ENCODE measurements at regions of chr2 and their contacts with region 1.

Region 1: DNA sequence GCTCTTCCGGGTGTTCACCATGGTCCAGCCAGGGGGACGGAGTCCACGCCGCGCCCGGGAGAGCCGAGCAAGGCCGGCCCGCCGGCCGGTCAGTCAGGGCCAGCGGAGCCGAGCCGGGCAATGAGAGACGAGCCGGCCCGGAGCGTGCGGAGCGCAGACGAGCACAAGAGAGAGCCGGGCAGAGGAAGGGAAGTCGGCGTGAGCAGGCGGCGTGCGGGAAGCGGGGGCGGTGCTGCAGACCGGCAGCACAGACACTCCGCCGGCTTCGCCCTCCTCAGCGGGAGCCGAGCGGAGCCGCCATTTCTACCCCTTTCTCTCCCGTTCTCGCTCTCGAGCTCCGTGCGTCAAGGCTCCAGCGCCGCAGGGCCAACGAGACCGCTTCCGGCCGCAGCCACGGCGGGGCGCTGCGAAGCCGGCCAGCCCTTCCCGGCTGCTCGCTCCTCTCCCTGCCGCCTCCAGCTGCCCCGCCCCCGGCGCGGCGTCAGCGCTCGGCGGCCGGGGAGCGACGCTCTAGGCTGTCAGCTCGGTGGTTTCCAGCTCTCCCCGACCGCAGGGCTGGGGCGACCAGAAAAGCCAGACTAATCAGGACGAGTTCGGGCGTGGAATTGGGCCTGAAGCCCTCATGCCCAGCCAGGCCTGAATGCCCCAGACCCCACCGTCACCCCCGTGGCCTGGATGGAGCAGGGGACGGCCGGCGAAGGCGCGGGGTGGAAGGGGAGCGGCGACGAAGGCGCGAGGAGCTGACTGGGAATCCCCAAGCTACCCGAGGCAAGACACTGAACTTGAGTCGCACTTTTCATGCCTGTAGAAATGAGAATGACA is at the start of gene ATAD2B:
- DNase-seq: peak; percentile 86 to 96
- H3K4me3 ChIP-seq: peak within 1 kb of the TSS; percentile 99
- H3K27ac ChIP-seq: peak within 1 kb of the TSS; percentile 76
- H3K4me1 ChIP-seq: peaks cover 30% of the 10 kb centered on the region
- H3K27me3 ChIP-seq: no peaks in the 10 kb centered on the region
- CTCF ChIP-seq: peak; percentile 79
- total RNA-seq, gene ATAD2B: 12.6 and 12.8 TPM in 2 replicates

Region 2: DNA sequence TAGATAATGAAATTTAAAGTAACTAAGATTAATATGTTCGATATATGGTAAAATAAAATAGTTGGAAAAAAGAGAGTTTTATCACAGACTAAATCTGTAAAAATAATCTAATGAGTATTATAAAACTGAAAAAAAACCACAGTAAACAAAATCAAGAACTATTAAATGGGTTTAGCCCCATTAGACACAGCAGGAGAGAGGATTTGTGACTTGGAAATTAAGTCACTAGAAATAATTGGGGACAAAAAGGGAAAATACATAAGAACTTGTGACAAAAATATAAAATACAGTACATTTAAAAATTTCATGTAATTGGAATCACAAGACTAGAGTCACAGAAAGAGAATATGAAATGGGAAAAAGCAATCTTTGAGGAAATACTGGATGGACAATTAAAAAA is 1656.6 kb before region 1 on chr2:
- CTCF ChIA-PET with region 1: no interaction called
- POLR2A ChIA-PET with region 1: no interaction called
- intact Hi-C with region 1: no loop called
- DNase-seq: no peak
- H3K4me3 ChIP-seq: no peak overlapping the region
- H3K27ac ChIP-seq: no peak overlapping the region
- H3K4me1 ChIP-seq: no peaks in the 10 kb centered on the region
- H3K27me3 ChIP-seq: 0 out of 2 replicates have a peak, but pooled peaks cover 3% of the 10 kb centered on the region
- CTCF ChIP-seq: no peak

Region 3: DNA sequence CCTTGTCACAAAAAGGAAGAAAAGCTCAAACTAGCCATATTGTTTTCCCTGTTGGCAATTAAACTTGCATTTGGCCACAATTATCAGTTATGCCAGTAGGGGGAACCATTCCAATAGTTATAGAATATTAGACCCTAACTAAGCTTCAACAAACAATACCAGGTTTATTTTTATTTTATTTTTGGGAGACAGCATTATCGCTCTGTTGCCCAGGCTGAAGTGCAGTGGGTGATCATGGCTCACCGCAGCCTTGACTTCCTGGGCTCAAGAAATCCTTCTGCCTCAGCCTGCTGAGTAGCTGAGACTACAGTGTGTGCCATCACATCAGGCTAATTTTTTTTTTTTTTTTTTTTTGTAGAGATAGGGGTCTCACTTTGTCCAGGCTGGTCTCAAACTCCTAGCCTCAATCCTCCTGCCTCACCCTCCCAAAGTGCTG is 102.2 kb before region 1 on chr2:
- CTCF ChIA-PET with region 1: interaction called, 4 read pairs
- POLR2A ChIA-PET with region 1: interaction called, 7 read pairs
- intact Hi-C with region 1: loop called (anchors 2 kb)
- DNase-seq: peak; percentile 17 to 41
- H3K4me3 ChIP-seq: no peak overlapping the region
- H3K27ac ChIP-seq: no peak overlapping the region
- H3K4me1 ChIP-seq: peaks cover 18% of the 10 kb centered on the region
- H3K27me3 ChIP-seq: no peaks in the 10 kb centered on the region
- CTCF ChIP-seq: peak; percentile 88

Region 4: DNA sequence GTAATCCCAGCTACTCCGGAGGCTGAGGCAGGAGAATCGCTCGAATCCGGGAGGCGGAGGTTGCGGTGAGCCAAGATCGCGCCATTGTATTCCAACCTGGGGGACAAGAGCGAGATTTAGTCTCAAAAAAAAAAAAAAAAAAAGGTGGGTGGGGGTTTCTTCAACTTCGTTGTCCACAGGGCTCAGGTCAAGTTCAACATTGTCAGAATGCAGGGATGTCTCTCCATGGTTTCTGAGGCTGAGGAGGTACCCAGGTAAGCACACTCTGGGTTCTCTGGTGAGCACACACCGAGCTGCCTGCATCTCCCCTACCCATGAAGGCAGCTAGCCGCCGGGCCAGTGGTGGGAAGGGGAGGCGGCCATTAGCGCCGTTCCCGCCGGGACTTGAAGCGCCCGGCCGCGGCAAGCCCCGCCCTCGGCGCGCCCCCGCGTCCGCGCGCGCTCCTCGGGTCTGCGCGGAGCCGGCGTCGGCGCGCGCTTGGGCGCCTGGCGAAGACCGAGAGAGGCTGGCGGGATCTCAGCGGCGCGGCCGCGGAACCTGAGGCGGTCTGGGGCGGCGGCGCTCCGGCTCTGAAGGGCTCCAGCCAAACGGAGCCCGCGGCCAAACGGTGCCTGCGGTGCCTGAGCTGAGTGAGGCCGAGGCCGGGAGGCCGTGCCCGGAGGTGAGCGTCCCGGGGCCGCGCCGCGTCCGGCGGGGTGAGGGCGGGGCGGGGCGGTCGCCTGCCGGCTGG is 13.2 kb after region 1 on chr2 and contains the start of gene UBXN2A:
- CTCF ChIA-PET with region 1: interaction called, 9 read pairs
- POLR2A ChIA-PET with region 1: interaction called, 7 read pairs
- intact Hi-C with region 1: loop called (anchors 1 kb)
- DNase-seq: peak; percentile 49 to 81
- H3K4me3 ChIP-seq: peak within 1 kb of the TSS; percentile 80
- H3K27ac ChIP-seq: peak within 1 kb of the TSS; percentile 44
- H3K4me1 ChIP-seq: peaks cover 7% of the 10 kb centered on the region; the same call in 1 of the 2 replicates
- H3K27me3 ChIP-seq: no peaks in the 10 kb centered on the region
- CTCF ChIP-seq: no peak
- total RNA-seq, gene UBXN2A: 16.9 and 17.6 TPM in 2 replicates

Region 5: GRCh38 chr2:23993736-23994269 is 66.8 kb after region 1 on chr2:
- CTCF ChIA-PET with region 1: no interaction called
- POLR2A ChIA-PET with region 1: interaction called, 15 read pairs
- intact Hi-C with region 1: no loop called
- DNase-seq: no peak
- H3K4me3 ChIP-seq: no peak overlapping the region
- H3K27ac ChIP-seq: no peak overlapping the region
- H3K4me1 ChIP-seq: no peaks in the 10 kb centered on the region
- H3K27me3 ChIP-seq: no peaks in the 10 kb centered on the region
- CTCF ChIP-seq: no peak

Measured in PC-9 (cell line).